Activated T-helper 2 cell treated with anti-CD3 and anti-CD28 coated beads, Interferon-gamma antibody, Interleukin-2, Interleukin-4, amounts not matched to agents 10 μg/mL and 5 μg/mL and 100 μg/mL, durations not matched to agents 14 hours and 24 hours and 36 hours (primary cell): ENCODE measurements at regions of chr2 and their contacts with region 1.

Region 1: GRCh38 chr2:219029829-219030165 is 11.5 kb downstream of the CFAP65 start:
- DNase-seq: peak; percentile 62
- H3K4me3 Mint-ChIP-seq: no peak overlapping the region
- H3K27ac Mint-ChIP-seq: no peak overlapping the region
- H3K4me1 Mint-ChIP-seq: no peaks in the 10 kb centered on the region
- H3K27me3 Mint-ChIP-seq: peaks cover 20% of the 10 kb centered on the region

Region 2: GRCh38 chr2:218959141-218959731 is 70.6 kb before region 1 on chr2 and contains the start of gene CDK5R2:
- intact Hi-C with region 1: no loop called
- DNase-seq: peak; percentile 58
- H3K4me3 Mint-ChIP-seq: peak within 1 kb of the TSS; percentile 14
- H3K27ac Mint-ChIP-seq: no peak within 1 kb of the TSS
- H3K4me1 Mint-ChIP-seq: no peaks in the 10 kb centered on the region
- H3K27me3 Mint-ChIP-seq: peaks cover 72% of the 10 kb centered on the region
- total RNA-seq, gene CDK5R2: not detected in 2 replicates

Region 3: GRCh38 chr2:219155054-219155644 is 125.4 kb after region 1 on chr2:
- intact Hi-C with region 1: loop called (anchors 2 kb)
- DNase-seq: no peak
- H3K4me3 Mint-ChIP-seq: no peak overlapping the region
- H3K27ac Mint-ChIP-seq: no peak overlapping the region
- H3K4me1 Mint-ChIP-seq: peaks cover 10% of the 10 kb centered on the region
- H3K27me3 Mint-ChIP-seq: no peaks in the 10 kb centered on the region